ENCODE measurements at regions of chr9 and their contacts with region 1.

Region 1: GRCh38 chr9:124126571-124127289 is 115.2 kb downstream of the LHX2 start:
- DNase-seq: peak; percentile 86
- CTCF ChIP-seq: peak; percentile 96

Region 2: DNA sequence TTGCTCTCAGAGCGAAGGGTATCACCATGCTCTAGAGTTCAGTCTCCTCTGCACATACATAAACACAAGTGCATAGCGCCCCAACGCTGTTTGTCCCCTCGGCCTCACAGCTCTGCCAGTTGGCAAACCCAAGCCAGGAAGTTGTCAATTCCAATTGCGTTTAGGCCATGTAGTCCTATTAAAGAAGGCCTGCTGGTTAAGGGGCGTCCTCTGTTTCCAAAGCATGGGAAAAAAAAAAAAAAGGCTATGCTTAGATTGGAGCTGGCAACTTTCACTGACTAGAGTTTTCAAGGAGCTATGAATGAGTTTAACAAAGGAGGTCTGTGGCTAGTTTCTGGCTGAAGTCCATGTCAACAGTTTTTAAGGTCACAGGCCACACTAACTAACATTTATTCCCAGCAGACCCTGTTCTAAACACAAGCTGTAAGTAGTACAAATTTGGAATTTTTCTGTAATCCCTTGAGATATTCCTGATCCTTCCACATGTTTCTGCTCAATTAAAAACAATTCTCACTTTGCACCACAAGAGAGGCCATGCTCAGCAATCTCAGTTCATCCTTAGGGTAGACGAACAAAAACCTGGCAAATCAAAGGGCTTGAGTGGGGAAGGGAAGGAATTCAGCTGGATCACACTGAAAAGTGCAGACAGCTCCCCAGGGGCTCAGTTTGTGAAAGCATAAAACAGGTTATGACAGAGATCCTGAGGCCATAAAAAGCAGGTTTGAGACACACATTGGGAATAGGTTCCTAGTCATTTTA is 384.5 kb before region 1 on chr9:
- CTCF ChIA-PET with region 1: no interaction called
- POLR2A ChIA-PET with region 1: no interaction called
- DNase-seq: no peak
- CTCF ChIP-seq: no peak

Region 3: DNA sequence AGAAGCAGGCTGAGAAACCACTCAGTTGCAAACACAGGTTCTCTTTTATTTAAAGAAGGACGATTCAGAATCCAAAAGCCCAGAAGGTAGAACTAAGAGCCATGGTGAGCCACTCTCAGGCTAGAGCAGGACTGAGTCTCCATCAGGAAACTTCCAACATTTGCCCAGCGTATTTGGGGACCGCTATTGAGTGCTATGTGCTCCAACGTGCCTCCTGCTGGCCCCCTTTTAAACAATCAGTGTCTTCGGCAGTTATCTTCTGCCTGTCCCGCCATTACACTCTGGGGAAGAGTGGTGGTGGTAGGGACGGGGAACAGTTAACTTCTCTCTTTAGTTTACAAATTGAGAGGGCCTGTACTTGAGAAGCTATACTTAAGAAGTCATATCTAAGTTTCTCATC is 274.9 kb before region 1 on chr9:
- CTCF ChIA-PET with region 1: no interaction called
- POLR2A ChIA-PET with region 1: no interaction called
- DNase-seq: no peak
- CTCF ChIP-seq: no peak

Region 4: DNA sequence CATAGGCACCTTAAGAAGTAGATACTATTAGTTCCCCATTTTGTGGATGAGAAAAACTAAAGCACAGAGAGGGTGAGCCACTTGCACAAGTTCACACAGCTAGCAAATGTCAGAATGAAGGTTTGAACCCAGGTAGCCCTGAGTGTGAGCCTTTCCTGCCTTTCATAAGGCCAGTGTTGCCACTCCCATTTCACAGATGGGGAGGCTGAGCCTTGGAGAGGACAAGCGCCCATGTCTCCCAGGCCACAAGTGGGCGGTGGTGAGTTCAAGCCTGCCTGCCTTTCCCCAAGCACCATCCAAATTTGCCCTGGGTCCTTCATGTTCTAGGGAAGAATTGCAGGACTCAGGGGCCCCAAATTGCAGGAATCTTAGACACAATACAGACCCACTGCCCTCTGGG is 64.6 kb before region 1 on chr9:
- CTCF ChIA-PET with region 1: no interaction called
- POLR2A ChIA-PET with region 1: no interaction called
- DNase-seq: no peak
- CTCF ChIP-seq: peak; percentile 32

Region 5: GRCh38 chr9:124137009-124137943 is 10.5 kb after region 1 on chr9:
- CTCF ChIA-PET with region 1: interaction called, 19 read pairs
- POLR2A ChIA-PET with region 1: no interaction called
- DNase-seq: peak; percentile 77
- CTCF ChIP-seq: no peak

Region 6: GRCh38 chr9:124197177-124198095 is 70.7 kb after region 1 on chr9:
- CTCF ChIA-PET with region 1: interaction called, 23 read pairs
- POLR2A ChIA-PET with region 1: no interaction called
- DNase-seq: peak; percentile 75
- CTCF ChIP-seq: peak; percentile 17

Region 7: DNA sequence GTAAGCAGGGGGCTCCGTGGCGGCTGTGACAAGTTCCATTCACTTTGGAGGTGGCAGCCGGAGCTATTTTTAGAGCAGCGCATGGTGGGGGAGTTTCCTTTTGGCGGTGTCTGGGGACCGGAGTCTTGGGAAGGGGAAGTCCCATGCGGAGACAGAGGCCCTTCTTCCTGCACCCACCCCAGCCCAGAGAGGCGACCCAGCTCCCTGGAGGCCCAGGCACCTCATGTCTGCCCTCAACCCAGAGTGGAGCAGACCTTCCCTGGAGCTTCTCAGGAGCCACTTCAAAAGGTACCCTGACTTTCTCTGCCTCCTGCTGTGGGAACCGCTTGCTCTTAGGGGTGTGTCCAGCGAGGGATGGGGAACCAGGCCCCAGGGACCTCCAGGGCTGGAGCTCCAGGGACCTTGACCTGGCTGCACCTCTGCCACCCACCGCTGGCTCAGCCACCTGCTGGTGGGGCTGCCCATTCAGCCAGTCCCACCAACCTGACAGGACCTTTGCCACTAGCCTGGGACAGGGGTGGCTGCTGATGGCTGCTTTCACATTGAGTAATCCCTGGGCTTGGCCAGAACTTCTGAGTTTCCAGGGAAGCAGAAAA is 165.2 kb after region 1 on chr9:
- CTCF ChIA-PET with region 1: interaction called, 25 read pairs
- POLR2A ChIA-PET with region 1: no interaction called
- DNase-seq: peak; percentile 76
- CTCF ChIP-seq: no peak

Region 8: GRCh38 chr9:124326378-124326777 is 199.6 kb after region 1 on chr9:
- CTCF ChIA-PET with region 1: interaction called, 12 read pairs
- POLR2A ChIA-PET with region 1: no interaction called
- DNase-seq: no peak
- CTCF ChIP-seq: no peak